ENCODE measurements at regions of chr14 and their contacts with region 1.

Region 1: DNA sequence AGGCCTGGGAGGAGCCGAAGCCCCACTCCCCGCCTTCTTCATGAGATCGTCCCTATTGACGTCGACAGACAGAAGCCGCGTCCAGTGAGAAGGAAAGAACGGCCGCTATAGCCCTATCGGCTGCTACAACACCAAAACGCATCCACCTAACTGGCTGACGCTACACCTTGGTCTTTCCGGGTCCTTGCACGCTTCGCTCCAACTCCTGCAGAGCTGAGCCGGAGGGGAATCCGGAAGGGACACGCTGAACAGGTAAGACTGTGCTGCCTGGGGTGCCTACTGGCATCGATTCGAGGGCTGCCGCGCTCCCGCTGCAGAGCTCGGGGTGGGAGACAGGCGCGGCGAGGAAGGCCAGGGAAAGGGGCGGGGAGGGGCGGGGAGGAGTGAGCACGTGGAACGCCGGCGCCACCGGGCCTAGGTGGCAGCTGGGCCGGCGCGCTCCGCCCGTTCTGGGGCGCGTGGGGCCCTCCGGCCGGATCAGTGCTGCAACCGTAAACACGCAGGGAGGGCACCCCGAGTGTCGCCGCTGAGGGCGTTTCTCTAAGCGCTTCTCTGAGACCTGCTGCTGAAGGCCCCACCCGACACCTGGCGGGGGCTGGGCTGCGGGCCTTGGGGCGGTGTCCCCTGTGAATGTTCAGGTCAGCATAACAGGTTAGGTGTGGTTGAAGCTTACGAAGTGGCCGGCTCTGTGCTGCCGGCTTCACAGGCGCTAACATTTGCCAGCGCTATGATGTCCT is at the start of gene DCAF4:
- DNase-seq: peak; percentile 97
- ATAC-seq: peak; percentile 91
- H3K4me3 ChIP-seq: peak within 1 kb of the TSS; percentile 55 to 87 (median 70)
- H3K4me3 Mint-ChIP-seq: peak within 1 kb of the TSS; percentile 99
- H3K27ac ChIP-seq: peak within 1 kb of the TSS; percentile 66 to 89
- H3K27ac Mint-ChIP-seq: peak within 1 kb of the TSS; percentile 95
- H3K4me1 ChIP-seq: peaks cover 10 to 23% of the 10 kb centered on the region in 2 donors
- H3K4me1 Mint-ChIP-seq: peaks cover 15% of the 10 kb centered on the region
- H3K27me3 ChIP-seq: no peaks in the 10 kb centered on the region
- H3K27me3 Mint-ChIP-seq: peaks cover 7% of the 10 kb centered on the region
- CTCF ChIP-seq: no peak
- total RNA-seq, gene DCAF4: 35.3 and 36.2 TPM in 2 replicates

Region 2: DNA sequence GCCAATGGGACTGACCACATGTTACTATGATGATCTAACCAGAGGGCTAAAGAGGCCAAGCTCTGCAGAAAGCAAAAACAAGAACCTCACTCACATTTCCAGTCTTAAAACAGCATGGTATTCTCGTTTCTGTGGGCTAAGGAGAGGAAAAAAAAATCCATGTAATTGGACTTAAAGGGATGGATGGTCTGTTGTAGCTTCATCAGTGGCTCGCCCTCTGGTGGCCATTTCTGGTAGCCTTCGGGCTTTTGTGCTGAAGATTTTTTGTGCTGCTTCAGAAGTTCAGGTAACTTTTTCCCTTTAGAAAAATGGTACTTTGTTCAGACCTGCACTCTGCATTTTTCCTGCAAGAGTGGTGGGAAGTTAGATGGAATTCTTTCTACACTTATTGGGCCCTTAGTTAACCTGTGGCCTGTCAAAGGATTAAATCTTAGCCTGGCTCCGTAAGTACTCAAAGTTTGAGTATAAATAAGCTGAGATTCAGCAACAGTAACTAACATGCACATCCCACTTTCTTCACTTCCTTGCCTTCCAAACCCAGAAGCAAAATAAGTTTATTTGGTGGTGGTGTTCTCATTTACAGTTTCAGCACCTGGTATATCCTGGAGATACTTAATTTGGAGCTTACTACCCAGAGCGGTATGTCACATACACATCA is 22.1 kb after region 1 on chr14:
- CTCF ChIA-PET with region 1: interaction called, 10 read pairs
- POLR2A ChIA-PET with region 1: no interaction called
- intact Hi-C with region 1: loop called (anchors 2 kb)
- DNase-seq: peak; percentile 71
- ATAC-seq: peak; percentile 43
- H3K4me3 ChIP-seq: no peak overlapping the region
- H3K4me3 Mint-ChIP-seq: no peak overlapping the region
- H3K27ac ChIP-seq: no peak overlapping the region
- H3K27ac Mint-ChIP-seq: peak overlapping the region; percentile 8
- H3K4me1 ChIP-seq: no peaks in the 10 kb centered on the region
- H3K4me1 Mint-ChIP-seq: no peaks in the 10 kb centered on the region
- H3K27me3 ChIP-seq: no peaks in the 10 kb centered on the region
- H3K27me3 Mint-ChIP-seq: no peaks in the 10 kb centered on the region
- CTCF ChIP-seq: peak; percentile 89

Region 3: DNA sequence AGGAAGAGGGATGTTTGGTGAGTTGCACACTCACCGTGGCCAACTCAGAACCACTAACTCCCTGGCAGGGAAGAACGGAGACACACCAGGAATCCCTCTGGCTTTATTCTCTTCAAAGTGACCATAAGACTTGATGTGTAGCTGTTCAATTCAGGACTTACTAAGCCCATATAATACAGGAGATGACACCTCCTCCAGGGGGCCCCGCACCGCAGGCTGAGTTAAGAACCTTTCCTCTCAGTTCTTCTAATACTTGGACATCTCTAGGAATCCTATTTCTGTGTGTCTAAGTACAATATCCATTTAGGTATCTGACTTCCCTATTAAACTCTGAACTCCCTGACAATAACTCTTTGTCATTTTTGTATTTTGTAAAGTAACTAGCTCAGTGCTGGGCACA is 49.3 kb after region 1 on chr14:
- CTCF ChIA-PET with region 1: no interaction called
- POLR2A ChIA-PET with region 1: no interaction called
- intact Hi-C with region 1: no loop called
- DNase-seq: no peak
- ATAC-seq: no peak
- H3K4me3 ChIP-seq: no peak overlapping the region
- H3K4me3 Mint-ChIP-seq: no peak overlapping the region
- H3K27ac ChIP-seq: no peak overlapping the region
- H3K27ac Mint-ChIP-seq: no peak overlapping the region
- H3K4me1 ChIP-seq: no peaks in the 10 kb centered on the region
- H3K4me1 Mint-ChIP-seq: no peaks in the 10 kb centered on the region
- H3K27me3 ChIP-seq: no peaks in the 10 kb centered on the region
- H3K27me3 Mint-ChIP-seq: no peaks in the 10 kb centered on the region
- CTCF ChIP-seq: no peak